ENCODE measurements at regions of chr7 and their contacts with region 1.

Region 1: GRCh38 chr7:72493850-72494661 is 81.9 kb upstream of the CALN1 start:
- DNase-seq: peak; percentile 57
- ATAC-seq: peak in 1 of 2 donors; percentile 46

Region 2: DNA sequence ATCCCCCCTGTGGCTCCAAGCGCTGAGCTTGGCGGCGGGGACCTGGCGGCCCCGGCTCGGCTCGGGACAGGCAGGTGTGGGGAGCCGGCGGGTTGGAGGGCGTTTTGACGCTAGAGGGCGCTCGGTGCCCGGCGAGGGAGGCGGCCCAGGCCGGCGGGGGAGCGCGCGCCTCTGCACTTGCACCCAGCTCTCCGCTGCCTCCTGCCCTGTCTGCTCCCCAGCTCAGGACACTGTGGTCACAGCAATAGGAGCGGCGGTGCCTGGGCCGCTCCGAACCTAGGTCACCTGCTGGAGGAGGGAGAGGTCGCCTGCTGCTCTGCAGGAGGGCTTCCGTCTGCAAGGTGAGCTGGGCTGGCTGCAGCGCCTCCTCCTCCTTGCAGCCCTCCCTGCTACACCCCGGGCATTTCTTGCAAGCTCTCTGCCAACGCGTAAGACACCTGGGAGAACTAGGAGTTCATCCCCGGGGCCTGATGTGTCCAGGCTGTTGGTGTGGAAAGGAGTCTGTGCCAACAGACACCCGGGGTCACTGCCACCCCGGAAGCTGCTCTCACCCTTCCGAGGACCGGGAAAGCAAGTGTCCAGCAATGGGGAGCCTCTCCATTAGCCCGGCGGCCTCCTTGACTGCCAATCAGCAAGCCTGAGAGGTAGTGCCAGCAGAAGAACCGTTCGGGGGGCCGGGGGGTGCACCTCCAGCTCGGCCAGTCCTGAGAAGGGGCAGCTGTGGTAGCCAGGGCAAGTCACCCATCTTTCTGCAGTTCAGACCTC is 741.7 kb before region 1 on chr7:
- intact Hi-C with region 1: loop called in 1 of 2 experiments (anchors 2 kb)
- DNase-seq: peak; percentile 31
- ATAC-seq: peak; percentile 59 to 77

Measured in left cardiac atrium (tissue), 4 donors.